Cardiac septum (tissue), 1 donor: ENCODE measurements at regions of chr9 and their contacts with region 1.

Region 1: GRCh38 chr9:89602978-89603766 is 1.6 kb upstream of the GADD45G start:
- DNase-seq: peak; percentile 95

Region 2: GRCh38 chr9:89686095-89686494 is 82.9 kb after region 1 on chr9:
- intact Hi-C with region 1: loop called (anchors 5 kb)
- DNase-seq: no peak

Region 3: DNA sequence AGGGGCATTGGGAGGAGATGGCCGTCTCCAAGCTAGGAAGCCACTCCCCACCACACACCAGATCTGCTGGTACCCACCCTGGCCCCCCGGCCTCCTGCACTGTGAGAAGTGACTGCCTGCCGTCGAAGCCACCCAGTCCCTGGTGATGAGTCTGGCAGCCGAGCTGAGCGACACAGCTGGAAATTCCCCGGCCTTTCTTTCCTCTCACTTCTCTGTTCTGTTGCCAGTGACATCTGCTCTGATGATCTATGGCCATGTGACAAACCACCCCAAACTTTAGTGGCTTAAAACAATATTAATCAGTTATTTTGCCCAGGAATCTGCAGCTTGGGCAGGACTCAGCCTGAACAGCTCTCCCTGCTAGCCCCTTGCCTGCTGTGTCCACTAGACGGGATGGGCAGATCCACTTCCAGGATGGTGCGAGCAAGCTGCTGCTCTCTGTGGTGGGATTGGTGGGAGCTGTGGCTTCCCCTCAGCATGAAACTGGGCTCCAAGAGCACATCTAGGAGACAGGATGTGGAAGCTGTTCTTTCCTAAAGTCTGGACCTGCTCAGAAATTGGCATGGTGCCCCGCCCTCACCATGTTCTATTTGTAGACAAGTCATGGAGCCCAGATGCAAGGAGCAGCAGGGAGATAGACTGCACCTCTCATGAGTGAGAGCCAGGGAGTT is 212.9 kb after region 1 on chr9:
- intact Hi-C with region 1: loop called (anchors 5 kb)
- DNase-seq: no peak

Region 4: DNA sequence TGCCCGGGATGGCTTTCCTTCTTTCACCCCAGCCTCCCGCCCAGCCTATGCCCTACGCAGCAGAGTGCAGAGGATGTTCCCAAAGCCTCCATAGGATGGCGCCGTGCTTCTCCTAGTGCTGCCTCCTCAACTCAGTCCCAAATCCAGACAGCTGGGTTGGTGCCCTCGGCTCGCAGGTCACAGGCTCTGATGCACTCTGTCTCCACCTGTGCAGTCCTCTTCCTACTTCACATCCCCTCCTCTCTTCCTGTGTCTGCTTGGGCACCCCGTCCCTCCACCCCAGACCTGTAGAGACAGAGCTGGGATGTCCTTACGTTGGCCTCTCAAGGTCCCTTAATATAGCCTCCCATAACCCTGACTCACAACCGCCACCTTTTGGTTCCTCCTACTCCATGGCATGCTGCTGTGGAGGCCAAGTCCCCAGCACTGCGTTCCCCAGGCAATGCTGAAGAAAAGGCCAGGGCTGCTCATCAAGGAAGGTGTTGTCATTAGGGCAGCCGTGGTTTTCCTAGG is 316.1 kb after region 1 on chr9:
- intact Hi-C with region 1: loop called (anchors 1 kb)
- DNase-seq: no peak

Region 5: DNA sequence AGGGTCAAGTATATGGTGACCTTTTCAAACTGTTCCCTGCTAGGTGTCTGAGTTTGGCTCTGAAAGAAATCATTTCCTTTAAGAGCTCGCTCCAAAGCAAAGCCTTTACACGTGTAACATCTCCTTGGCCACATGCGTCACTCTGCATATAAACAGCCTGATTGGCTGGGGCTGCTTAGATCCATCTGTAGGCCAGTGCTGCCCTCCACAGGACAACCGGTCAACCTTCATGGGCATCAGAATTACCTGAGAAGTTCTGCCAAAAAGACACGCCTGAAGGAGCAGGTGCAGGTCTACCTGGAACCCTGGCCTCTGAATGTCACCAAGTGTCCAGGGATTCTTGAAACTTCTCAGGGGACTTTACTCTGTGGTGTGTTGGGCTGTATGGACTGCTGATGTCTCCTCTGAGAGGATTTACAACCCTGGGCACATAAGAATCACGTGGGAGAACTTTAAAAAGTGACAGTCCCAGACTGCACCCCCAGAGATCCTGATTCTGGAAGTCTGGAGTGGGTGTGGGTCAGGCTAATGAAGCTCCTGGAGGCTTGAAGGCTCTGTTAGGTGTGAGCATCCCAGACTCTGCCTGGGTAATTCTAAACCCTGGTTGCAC is 499.2 kb after region 1 on chr9:
- intact Hi-C with region 1: loop called (anchors 1 kb)
- DNase-seq: peak; percentile 88